ENCODE measurements at regions of chr14 and their contacts with region 1.

Region 1: DNA sequence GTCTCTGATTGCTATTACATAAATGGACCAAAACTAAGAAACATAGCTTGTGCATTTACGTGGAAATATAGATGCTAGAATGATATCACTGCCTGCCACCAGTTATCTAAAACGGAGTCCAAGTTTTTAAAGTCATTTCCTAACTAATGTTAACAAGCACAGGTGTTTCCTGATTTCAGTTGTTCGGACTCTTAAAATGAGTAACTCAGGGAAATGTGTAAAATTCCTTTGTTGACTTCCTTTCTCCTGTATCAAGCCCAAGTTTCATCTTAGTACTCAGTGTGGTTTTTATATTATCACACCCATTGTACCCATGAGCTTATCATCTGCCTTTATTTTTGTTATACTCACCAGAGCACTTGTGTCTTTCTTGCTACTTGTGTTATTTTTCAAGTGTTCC is 13.2 kb upstream of the PRKCH start:
- DNase-seq: no peak
- H3K4me3 ChIP-seq: no peak overlapping the region
- H3K27ac ChIP-seq: peak overlapping the region; percentile 78
- H3K4me1 ChIP-seq: peaks cover 9% of the 10 kb centered on the region
- H3K27me3 ChIP-seq: no peaks in the 10 kb centered on the region
- CTCF ChIP-seq: no peak

Region 2: GRCh38 chr14:60753264-60754119 is 554.7 kb before region 1 on chr14:
- intact Hi-C with region 1: no loop called
- DNase-seq: no peak
- H3K4me3 ChIP-seq: no peak overlapping the region
- H3K27ac ChIP-seq: no peak overlapping the region
- H3K4me1 ChIP-seq: peaks cover 17% of the 10 kb centered on the region
- H3K27me3 ChIP-seq: no peaks in the 10 kb centered on the region
- CTCF ChIP-seq: no peak

Region 3: GRCh38 chr14:61188978-61189808 is 119.0 kb before region 1 on chr14:
- intact Hi-C with region 1: no loop called
- DNase-seq: peak; percentile 36
- H3K4me3 ChIP-seq: peak overlapping the region; percentile 58
- H3K27ac ChIP-seq: peak overlapping the region; percentile 41
- H3K4me1 ChIP-seq: peaks cover 8% of the 10 kb centered on the region
- H3K27me3 ChIP-seq: peaks cover 52% of the 10 kb centered on the region
- CTCF ChIP-seq: peak; percentile 52

Region 4: GRCh38 chr14:61355892-61356325 is 47.7 kb after region 1 on chr14:
- intact Hi-C with region 1: no loop called
- DNase-seq: peak; percentile 31
- H3K4me3 ChIP-seq: peak overlapping the region; percentile 5
- H3K27ac ChIP-seq: peak overlapping the region; percentile 79
- H3K4me1 ChIP-seq: peaks cover 38% of the 10 kb centered on the region
- H3K27me3 ChIP-seq: no peaks in the 10 kb centered on the region
- CTCF ChIP-seq: no peak

Region 5: GRCh38 chr14:61456720-61457119 is 148.5 kb after region 1 on chr14:
- intact Hi-C with region 1: loop called (anchors 10 kb)
- DNase-seq: peak; percentile 74
- H3K4me3 ChIP-seq: no peak overlapping the region
- H3K27ac ChIP-seq: no peak overlapping the region
- H3K4me1 ChIP-seq: peaks cover 42% of the 10 kb centered on the region
- H3K27me3 ChIP-seq: no peaks in the 10 kb centered on the region
- CTCF ChIP-seq: peak; percentile 91